Heart left ventricle (tissue), 16 donors: ENCODE measurements at regions of chr12 and their contacts with region 1.

Region 1: DNA sequence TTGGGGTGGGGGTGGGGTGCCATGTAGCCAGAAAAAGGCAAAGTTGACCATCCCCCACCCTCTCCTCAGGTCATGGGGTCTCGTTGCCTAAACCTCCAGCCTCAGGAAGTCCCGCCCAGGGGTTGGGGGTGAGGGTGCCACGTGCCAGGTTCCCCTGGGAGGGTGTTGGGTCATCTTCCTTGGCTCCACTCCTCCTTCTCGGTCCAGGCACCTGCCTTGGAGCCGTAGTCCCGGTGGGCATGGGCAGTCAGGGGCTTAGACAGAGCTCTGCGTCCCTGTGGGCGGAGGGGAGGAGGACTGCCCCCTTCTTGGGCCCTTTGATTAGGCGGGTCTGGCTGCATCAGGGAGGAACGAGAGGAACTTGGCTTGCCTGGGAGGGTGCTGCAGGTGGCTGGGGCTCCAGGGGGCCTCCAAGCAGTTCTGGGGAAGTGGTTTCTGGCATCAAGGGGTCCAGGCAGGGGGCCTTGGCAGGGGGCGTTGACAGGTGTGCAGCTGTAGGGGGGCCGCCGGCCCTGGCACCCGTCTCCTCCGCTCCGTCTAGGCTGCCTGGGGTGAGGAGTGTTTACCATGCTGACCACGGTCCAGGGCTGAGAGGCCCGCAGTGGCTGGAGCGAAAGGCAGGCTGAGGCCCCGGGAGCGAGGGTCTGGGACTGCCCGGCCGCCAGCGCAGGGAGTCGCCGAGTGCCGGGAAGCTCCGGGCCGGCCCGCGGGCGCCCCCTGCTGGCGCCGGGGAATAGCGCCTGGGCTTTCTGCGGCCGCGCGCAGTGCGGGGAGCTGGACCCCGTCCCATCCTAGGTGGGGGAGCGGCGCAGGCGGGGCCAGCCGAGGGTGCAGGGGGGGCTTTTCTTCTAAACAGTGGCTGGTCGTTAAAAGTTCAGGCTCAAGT is 7.9 kb downstream of the SETD1B start:
- DNase-seq: peak; percentile 69 to 88 (median 76)
- ATAC-seq: peak in 3 of 4 donors; percentile 84 to 87 (median 87)
- H3K4me3 ChIP-seq: peak overlapping the region; percentile 20 to 76 (median 58)
- H3K27ac ChIP-seq: peak overlapping the region in 11 of 12 donors; percentile 23 to 82 (median 64)
- H3K4me1 ChIP-seq: peaks cover 3 to 54% (median 41%) of the 10 kb centered on the region in 12 donors
- H3K27me3 ChIP-seq: no peaks in the 10 kb centered on the region
- CTCF ChIP-seq: peak; percentile 97 to 100 (median 100)
- POLR2A ChIP-seq: no peak

Region 2: GRCh38 chr12:121773011-121773777 is 38.5 kb before region 1 on chr12:
- intact Hi-C with region 1: loop called in 6 of 10 experiments (anchors 1 to 5 kb)
- DNase-seq: peak in 4 of 5 donors; percentile 66 to 87 (median 73)
- ATAC-seq: peak; percentile 58 to 72 (median 67)
- H3K4me3 ChIP-seq: peak overlapping the region in 1 of 12 donors; percentile 8
- H3K27ac ChIP-seq: peak overlapping the region in 10 of 12 donors; percentile 28 to 76 (median 68)
- H3K4me1 ChIP-seq: peaks cover 0 to 62% (median 21%) of the 10 kb centered on the region in 12 donors
- H3K27me3 ChIP-seq: no peaks in the 10 kb centered on the region
- CTCF ChIP-seq: peak; percentile 64 to 82 (median 75)
- POLR2A ChIP-seq: no peak